Naive thymus-derived CD4-positive, alpha-beta T cell (primary cell): ENCODE measurements at regions of chr6 and their contacts with region 1.

Region 1: DNA sequence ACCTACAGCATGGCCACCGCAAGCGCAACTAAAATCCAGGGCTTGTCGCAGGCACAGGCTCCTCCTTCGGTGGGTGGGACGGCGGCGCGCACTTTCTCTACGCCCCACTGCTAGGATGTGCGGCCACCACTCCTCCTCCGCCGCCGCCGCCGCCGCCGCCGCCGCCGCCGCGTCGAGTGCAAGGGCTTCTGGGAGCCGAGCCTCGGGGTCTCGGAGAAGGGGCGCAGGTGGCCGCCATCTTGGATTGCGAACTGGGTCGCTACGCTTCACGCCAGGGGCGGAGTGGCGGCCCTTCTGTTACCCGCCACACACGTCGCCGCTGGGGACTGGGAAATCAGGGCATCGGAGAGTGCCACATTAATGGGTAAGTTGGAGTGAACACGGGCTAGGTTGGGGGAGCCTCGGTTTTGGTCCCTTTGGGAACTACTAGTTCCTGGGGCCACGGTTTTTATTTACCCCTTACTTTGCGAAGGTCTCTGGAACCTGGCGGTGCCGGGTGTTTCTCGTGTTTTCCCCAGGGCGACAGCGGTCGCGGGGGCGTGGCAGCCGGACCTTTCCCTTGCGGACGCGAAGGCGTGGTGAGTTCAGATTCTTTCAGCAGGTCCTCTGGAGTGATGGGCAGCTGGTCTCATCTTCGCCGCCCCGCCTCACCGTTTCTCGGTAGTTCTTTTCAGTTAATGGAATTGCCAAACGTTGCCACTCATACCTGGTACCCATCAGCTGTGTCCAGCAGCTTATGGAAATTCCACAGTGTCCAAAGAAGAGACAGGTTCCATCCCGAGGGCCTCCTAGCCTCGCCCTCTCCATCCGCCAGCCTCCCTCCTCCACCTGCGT is at the start of gene KPNA5:
- DNase-seq: peak; percentile 82 to 91 (median 89)
- ATAC-seq: peak; percentile 97
- H3K4me3 ChIP-seq: peak within 1 kb of the TSS; percentile 88
- H3K4me3 Mint-ChIP-seq: peak within 1 kb of the TSS; percentile 94 to 99 (median 98)
- H3K27ac ChIP-seq: peak within 1 kb of the TSS; percentile 85
- H3K27ac Mint-ChIP-seq: peak within 1 kb of the TSS; percentile 96 to 99 (median 97)
- H3K4me1 ChIP-seq: peaks cover 0 to 13% of the 10 kb centered on the region in 2 donors
- H3K4me1 Mint-ChIP-seq: peaks cover 19 to 71% (median 46%) of the 10 kb centered on the region in 7 donors
- H3K27me3 ChIP-seq: no peaks in the 10 kb centered on the region
- H3K27me3 Mint-ChIP-seq: no peaks in the 10 kb centered on the region
- total RNA-seq, gene KPNA5: 11.0 to 78.2 (median 53.2) TPM

Region 2: DNA sequence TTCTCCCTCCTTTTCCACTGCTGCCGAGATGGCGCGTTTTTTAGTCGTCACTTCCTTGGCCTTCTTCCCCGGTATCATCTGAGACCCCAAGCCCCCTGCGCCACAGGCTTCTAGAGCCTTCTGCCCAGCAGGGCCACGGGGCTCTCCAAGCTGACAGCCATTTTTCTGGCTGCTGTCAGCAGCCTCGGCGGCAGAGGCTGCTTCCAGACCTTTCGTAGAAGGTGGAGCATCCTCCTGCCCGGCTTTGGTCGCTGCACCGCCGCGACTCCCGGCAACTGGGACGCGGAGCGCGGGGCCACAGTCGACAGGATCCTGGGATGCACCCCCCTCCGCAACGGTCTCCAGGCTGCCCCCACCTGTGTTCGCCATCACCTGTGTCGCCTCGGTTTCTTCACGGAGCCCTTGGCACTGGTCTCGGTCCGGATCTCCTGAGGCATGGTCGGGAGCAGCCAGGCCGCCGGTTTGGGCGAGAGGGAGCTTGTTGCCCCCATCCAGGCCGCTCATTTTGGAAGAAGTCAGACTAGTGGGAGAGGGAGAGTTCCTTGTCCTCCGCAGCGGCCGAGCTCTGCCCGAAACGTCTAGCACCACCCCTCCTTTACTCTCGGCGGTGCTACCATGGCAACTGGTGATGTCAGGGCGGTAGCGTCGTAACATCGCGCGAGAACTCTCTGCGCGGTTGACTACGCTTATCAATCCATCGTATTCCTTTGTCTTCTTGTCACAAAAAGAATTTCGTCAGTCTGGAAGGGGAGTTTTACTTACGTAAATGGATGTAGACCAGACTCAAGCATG is 427.5 kb before region 1 on chr6 and contains the start of gene TSPYL4:
- CTCF ChIA-PET with region 1: no interaction called
- POLR2A ChIA-PET with region 1: no interaction called
- intact Hi-C with region 1: loop called in 1 of 2 experiments (anchors 2 kb)
- DNase-seq: peak; percentile 76 to 96 (median 91)
- ATAC-seq: peak; percentile 97
- H3K4me3 ChIP-seq: peak within 1 kb of the TSS; percentile 80
- H3K4me3 Mint-ChIP-seq: no peak within 1 kb of the TSS
- H3K27ac ChIP-seq: peak within 1 kb of the TSS; percentile 97
- H3K27ac Mint-ChIP-seq: no peak within 1 kb of the TSS
- H3K4me1 ChIP-seq: peaks cover 27 to 36% of the 10 kb centered on the region in 2 donors
- H3K4me1 Mint-ChIP-seq: peaks cover 3 to 43% (median 27%) of the 10 kb centered on the region in 7 donors
- H3K27me3 ChIP-seq: no peaks in the 10 kb centered on the region
- H3K27me3 Mint-ChIP-seq: no peaks in the 10 kb centered on the region
- total RNA-seq, gene TSPYL4: 18.2 to 58.2 (median 21.5) TPM

Region 3: GRCh38 chr6:116444092-116444491 is 237.1 kb before region 1 on chr6:
- CTCF ChIA-PET with region 1: no interaction called
- POLR2A ChIA-PET with region 1: no interaction called
- intact Hi-C with region 1: no loop called
- DNase-seq: peak in 3 of 9 donors; percentile 7 to 27 (median 20)
- ATAC-seq: peak; percentile 76
- H3K4me3 ChIP-seq: no peak overlapping the region
- H3K4me3 Mint-ChIP-seq: peak overlapping the region in 1 of 10 donors; percentile 36
- H3K27ac ChIP-seq: no peak overlapping the region
- H3K27ac Mint-ChIP-seq: peak overlapping the region in 1 of 9 donors; percentile 25
- H3K4me1 ChIP-seq: peaks cover 0 to 4% of the 10 kb centered on the region in 2 donors
- H3K4me1 Mint-ChIP-seq: peaks cover 0 to 32% (median 0%) of the 10 kb centered on the region in 7 donors
- H3K27me3 ChIP-seq: no peaks in the 10 kb centered on the region
- H3K27me3 Mint-ChIP-seq: peaks cover 8 to 28% (median 20%) of the 10 kb centered on the region in 5 donors

Region 4: DNA sequence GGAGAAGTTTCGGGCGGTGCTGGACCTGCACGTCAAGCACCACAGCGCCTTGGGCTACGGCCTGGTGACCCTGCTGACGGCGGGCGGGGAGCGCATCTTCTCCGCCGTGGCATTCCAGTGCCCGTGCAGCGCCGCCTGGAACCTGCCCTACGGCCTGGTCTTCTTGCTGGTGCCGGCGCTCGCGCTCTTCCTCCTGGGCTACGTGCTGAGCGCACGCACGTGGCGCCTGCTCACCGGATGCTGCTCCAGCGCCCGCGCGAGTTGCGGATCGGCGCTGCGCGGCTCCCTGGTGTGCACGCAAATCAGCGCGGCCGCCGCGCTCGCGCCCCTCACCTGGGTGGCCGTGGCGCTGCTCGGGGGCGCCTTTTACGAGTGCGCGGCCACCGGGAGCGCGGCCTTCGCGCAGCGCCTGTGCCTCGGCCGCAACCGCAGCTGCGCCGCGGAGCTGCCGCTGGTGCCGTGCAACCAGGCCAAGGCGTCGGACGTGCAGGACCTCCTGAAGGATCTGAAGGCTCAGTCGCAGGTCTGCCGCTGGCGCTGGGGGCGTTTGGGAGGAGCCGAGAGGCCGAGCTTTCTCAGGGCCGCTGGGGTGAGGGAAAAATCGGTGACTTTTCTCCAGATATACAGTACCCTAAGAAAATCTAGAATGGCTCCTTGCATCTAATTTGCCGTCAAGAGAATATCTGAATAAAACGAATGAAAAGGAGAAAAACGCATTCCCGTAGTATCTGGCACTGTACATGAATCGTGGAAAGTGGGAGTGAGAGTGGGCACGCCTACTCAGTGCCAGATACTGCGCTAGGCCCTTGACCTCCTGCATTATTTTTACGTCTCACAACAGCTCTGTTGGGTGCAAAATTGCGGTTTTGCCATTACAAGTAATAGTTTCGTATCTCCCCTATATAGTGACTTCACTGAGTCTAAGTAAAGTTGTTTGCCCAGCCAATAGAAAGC is 219.0 kb before region 1 on chr6:
- CTCF ChIA-PET with region 1: no interaction called
- POLR2A ChIA-PET with region 1: no interaction called
- intact Hi-C with region 1: loop called in 1 of 2 experiments (anchors 5 kb)
- DNase-seq: peak; percentile 25 to 71 (median 62)
- ATAC-seq: peak; percentile 89
- H3K4me3 ChIP-seq: peak overlapping the region; percentile 58
- H3K4me3 Mint-ChIP-seq: peak overlapping the region; percentile 76 to 87 (median 80)
- H3K27ac ChIP-seq: no peak overlapping the region
- H3K27ac Mint-ChIP-seq: peak overlapping the region in 7 of 9 donors; percentile 33 to 92 (median 76)
- H3K4me1 ChIP-seq: peaks cover 7 to 16% of the 10 kb centered on the region in 2 donors
- H3K4me1 Mint-ChIP-seq: peaks cover 17 to 88% (median 26%) of the 10 kb centered on the region in 7 donors
- H3K27me3 ChIP-seq: no peaks in the 10 kb centered on the region
- H3K27me3 Mint-ChIP-seq: peaks cover 0 to 39% (median 4%) of the 10 kb centered on the region in 5 donors

Region 5: DNA sequence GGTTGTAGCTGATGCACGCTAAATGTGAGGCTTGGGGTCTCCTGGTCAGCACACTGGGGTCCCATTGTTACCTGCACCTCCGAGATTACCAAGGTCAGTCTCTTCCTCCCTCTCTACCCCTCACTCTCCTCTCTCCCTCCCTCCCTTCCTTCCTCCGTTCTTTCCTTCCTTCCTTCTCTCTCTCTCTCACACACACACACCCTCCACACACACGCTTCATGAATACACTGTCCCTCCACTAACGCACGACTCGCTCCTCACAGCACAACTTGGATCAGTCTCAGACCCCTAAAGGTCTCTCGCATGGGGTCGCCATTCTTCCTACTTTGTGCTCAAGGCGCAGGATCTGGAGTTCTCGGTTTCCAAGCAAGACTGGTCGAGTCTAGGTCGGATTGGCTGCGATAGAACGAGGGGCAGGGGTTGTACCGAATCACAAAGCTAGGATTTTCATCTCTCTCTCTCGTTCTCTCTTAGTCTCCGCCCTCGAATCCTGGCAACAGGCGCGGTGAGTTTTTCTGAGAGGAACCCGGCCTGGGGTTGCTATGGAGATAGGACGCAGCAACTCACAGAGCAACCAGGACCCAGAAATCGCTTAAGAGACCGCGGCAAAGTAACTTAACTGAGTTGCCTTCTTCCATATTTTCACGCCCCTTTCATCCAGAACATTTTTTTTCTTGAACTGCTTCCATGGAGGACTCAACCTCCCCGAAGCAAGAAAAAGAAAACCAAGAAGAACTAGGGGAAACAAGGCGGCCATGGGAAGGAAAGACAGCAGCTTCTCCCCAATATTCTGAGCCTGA is 65.1 kb before region 1 on chr6 and contains the start of gene RSPH4A:
- CTCF ChIA-PET with region 1: no interaction called
- POLR2A ChIA-PET with region 1: no interaction called
- intact Hi-C with region 1: loop called in 1 of 2 experiments (anchors 2 kb)
- DNase-seq: peak; percentile 17 to 76 (median 61)
- ATAC-seq: peak; percentile 95
- H3K4me3 ChIP-seq: peak within 1 kb of the TSS; percentile 78
- H3K4me3 Mint-ChIP-seq: peak within 1 kb of the TSS; percentile 81 to 94 (median 86)
- H3K27ac ChIP-seq: peak within 1 kb of the TSS; percentile 28
- H3K27ac Mint-ChIP-seq: peak within 1 kb of the TSS in 8 of 9 donors; percentile 4 to 78 (median 38)
- H3K4me1 ChIP-seq: peaks cover 5 to 6% of the 10 kb centered on the region in 2 donors
- H3K4me1 Mint-ChIP-seq: peaks cover 6 to 22% (median 16%) of the 10 kb centered on the region in 7 donors
- H3K27me3 ChIP-seq: no peaks in the 10 kb centered on the region
- H3K27me3 Mint-ChIP-seq: peaks cover 0 to 54% (median 14%) of the 10 kb centered on the region in 5 donors
- total RNA-seq, gene RSPH4A: 0.53 to 1.3 (median 0.73) TPM

Region 6: GRCh38 chr6:116695401-116695800 is 14.2 kb after region 1 on chr6:
- CTCF ChIA-PET with region 1: no interaction called
- POLR2A ChIA-PET with region 1: interaction called, 6 read pairs
- intact Hi-C with region 1: loop called in 1 of 2 experiments (anchors 1 kb)
- DNase-seq: no peak
- ATAC-seq: peak; percentile 57
- H3K4me3 ChIP-seq: no peak overlapping the region
- H3K4me3 Mint-ChIP-seq: peak overlapping the region in 2 of 10 donors; percentile 44 to 72
- H3K27ac ChIP-seq: no peak overlapping the region
- H3K27ac Mint-ChIP-seq: peak overlapping the region in 3 of 9 donors; percentile 5 to 63 (median 53)
- H3K4me1 ChIP-seq: no peaks in the 10 kb centered on the region
- H3K4me1 Mint-ChIP-seq: peaks cover 29 to 58% (median 52%) of the 10 kb centered on the region in 7 donors
- H3K27me3 ChIP-seq: no peaks in the 10 kb centered on the region
- H3K27me3 Mint-ChIP-seq: no peaks in the 10 kb centered on the region